ENCODE measurements at regions of chr3 and their contacts with region 1.

Region 1: DNA sequence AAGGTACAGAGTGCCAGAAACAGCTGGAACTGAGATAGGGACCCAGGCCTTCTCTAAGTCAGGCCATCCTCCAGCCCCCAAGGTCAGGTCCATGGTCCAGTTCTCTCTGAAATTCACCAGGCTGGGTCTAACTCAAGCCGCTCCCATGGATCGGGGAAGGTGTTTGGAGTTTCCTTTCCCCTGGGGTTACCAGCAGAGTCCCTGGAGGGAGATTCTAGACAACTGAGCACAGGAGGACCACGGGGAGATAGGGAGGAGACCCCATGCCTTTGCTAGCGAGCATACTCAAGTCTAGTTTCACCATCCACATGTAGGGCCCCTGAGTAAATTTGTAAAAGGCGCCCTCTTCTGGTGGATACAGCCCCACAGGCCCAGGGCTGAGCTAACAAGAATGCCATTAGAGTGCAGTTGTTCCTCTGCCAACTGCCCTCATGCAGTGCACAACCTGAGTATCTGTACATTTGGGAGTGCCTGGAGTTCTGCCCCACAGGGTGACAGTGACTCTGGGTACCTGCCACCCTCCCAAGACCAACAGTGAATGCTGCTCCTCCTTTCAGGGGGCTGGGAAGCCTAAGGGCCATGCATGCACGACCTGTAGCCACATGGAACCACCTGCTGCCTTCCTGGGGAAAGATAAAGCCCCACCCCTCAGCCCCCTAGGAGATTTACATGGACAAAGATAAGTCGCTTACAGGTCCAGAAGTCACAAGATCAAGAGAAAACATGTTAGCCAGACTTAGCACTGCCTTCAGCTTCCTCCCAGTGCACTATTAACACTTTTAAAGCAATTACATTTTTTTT is 89.0 kb downstream of the IQSEC1 start:
- DNase-seq: peak; percentile 54 to 70
- ATAC-seq: peak; percentile 93

Region 2: GRCh38 chr3:12868039-12869034 is 115.9 kb before region 1 on chr3:
- intact Hi-C with region 1: no loop called
- DNase-seq: peak; percentile 75 to 80
- ATAC-seq: peak; percentile 95

Region 3: GRCh38 chr3:12891985-12892839 is 92.0 kb before region 1 on chr3:
- intact Hi-C with region 1: loop called in 1 of 2 experiments (anchors 10 kb)
- DNase-seq: peak in 1 of 2 donors; percentile 39
- ATAC-seq: peak; percentile 82

Region 4: GRCh38 chr3:13119471-13120220 is 135.4 kb after region 1 on chr3:
- intact Hi-C with region 1: no loop called
- DNase-seq: no peak
- ATAC-seq: no peak

Measured in left colon (tissue), 2 donors.